Activated naive CD4-positive, alpha-beta T cell treated with anti-CD3 and anti-CD28 coated beads for 36 hours (primary cell): ENCODE measurements at regions of chr5 and their contacts with region 1.

Region 1: GRCh38 chr5:167723254-167723871 is 568.1 kb upstream of the WWC1 start:
- DNase-seq: peak; percentile 78
- H3K4me3 Mint-ChIP-seq: no peak overlapping the region
- H3K27ac Mint-ChIP-seq: no peak overlapping the region
- H3K4me1 Mint-ChIP-seq: peaks cover 4% of the 10 kb centered on the region
- H3K27me3 Mint-ChIP-seq: peaks cover 14% of the 10 kb centered on the region

Region 2: DNA sequence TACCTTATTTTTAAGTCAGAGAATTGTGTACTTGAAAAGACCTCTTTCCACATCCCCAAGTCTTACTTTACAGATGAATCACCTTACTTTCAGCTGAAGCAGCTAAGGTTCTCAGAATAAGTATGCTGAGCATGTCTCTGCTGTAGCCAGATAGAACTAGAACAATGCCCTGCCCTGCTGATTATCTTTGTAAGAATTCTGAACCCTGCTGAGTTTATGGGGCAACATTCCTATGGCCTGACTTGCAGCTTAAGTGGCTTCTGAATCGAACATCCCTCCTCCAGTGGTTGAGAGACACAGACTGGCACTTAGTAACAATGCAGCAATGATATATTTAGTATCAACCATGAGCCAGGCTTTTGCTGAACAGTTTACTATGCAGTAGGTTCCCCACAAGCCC is 23.9 kb before region 1 on chr5:
- CTCF ChIA-PET with region 1: no interaction called
- intact Hi-C with region 1: no loop called
- DNase-seq: no peak
- H3K4me3 Mint-ChIP-seq: no peak overlapping the region
- H3K27ac Mint-ChIP-seq: no peak overlapping the region
- H3K4me1 Mint-ChIP-seq: no peaks in the 10 kb centered on the region
- H3K27me3 Mint-ChIP-seq: peaks cover 4% of the 10 kb centered on the region

Region 3: DNA sequence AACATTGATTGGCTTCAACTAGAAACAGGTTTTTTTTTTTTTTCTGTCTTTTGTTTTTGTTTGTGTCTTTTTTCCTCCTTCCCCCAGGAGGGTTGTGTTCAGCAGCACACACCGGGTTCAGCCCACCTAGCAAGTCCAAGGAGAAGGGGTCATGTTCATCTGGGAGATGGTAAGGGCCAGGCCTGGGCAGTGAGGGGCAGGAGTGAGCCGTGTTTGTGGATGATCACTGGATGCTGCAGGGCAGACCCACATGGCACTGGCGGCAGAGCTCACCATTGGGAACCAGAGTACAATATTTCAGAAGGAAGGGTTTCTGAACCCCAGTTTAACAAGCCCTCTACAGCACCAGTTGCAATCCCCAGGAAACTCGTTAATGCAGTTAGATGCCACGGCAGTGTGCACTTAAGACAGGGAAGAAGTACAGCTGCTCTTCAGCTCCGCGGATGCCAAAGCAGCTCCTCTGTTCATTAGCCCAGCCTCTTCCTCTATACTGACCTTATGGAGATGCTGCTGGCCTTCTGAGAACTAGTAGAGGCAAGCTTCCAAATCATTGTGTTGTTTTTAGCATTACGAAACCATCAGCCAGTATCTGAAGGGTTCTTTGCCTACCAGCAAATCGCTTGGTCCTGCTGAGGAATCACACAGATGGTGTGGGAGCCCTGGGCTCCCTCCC is 59.9 kb after region 1 on chr5:
- CTCF ChIA-PET with region 1: no interaction called
- intact Hi-C with region 1: no loop called
- DNase-seq: no peak
- H3K4me3 Mint-ChIP-seq: no peak overlapping the region
- H3K27ac Mint-ChIP-seq: no peak overlapping the region
- H3K4me1 Mint-ChIP-seq: no peaks in the 10 kb centered on the region
- H3K27me3 Mint-ChIP-seq: no peaks in the 10 kb centered on the region

Region 4: GRCh38 chr5:168047043-168047668 is 323.8 kb after region 1 on chr5:
- CTCF ChIA-PET with region 1: interaction called, 9 read pairs
- intact Hi-C with region 1: loop called (anchors 1 kb)
- DNase-seq: peak; percentile 52
- H3K4me3 Mint-ChIP-seq: no peak overlapping the region
- H3K27ac Mint-ChIP-seq: no peak overlapping the region
- H3K4me1 Mint-ChIP-seq: no peaks in the 10 kb centered on the region
- H3K27me3 Mint-ChIP-seq: no peaks in the 10 kb centered on the region

Region 5: GRCh38 chr5:168076561-168076991 is 353.2 kb after region 1 on chr5:
- CTCF ChIA-PET with region 1: no interaction called
- intact Hi-C with region 1: loop called (anchors 1 kb)
- DNase-seq: peak; percentile 28
- H3K4me3 Mint-ChIP-seq: no peak overlapping the region
- H3K27ac Mint-ChIP-seq: no peak overlapping the region
- H3K4me1 Mint-ChIP-seq: peaks cover 2% of the 10 kb centered on the region
- H3K27me3 Mint-ChIP-seq: peaks cover 3% of the 10 kb centered on the region

Region 6: DNA sequence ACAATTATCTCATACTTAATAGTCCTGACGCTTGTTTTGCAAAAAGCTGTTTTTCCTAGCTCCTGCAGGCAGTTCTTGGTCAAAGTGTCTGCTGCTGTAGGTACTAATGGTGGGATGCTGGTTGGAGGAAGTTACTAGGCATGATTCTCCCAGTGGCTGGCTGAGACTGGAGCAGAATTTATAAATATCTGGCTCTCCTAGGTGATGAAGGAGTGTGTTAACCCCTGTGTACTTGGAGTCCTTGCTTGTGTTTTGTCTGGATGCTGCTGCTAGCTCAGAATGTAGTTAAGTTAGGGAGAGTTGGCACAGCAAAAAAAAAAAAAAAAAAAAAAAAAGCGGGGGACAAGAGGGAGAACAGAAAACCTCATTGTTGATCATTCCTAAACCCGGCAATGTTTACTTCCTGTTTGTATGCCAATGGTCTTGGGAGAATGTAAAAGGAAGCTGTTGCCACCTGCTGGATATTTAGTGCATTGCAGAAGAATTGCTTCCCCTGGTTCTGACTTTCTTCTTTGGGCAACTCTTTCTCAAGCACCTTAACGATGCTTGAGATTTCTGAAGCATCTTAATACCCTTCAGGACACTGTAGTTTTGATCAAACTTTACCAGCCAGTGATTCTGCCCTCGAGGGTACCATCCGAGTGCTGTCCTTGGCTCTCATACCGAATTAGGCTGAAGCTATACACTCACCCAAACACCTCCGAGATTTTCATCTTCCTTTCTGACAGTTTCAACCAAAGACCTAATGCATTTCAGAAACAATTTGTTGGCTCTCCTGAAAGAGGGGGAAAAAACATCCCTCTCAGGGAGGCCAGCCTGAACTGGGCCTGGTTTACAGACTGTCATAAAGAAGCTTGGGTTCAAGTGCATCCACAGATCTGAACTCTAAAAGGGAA is 496.4 kb after region 1 on chr5:
- CTCF ChIA-PET with region 1: interaction called, 25 read pairs
- intact Hi-C with region 1: loop called (anchors 1 kb)
- DNase-seq: peak; percentile 61
- H3K4me3 Mint-ChIP-seq: no peak overlapping the region
- H3K27ac Mint-ChIP-seq: no peak overlapping the region
- H3K4me1 Mint-ChIP-seq: peaks cover 3% of the 10 kb centered on the region
- H3K27me3 Mint-ChIP-seq: no peaks in the 10 kb centered on the region